SK-N-SH (cell line): ENCODE measurements at regions of chr10 and their contacts with region 1.

Region 1: DNA sequence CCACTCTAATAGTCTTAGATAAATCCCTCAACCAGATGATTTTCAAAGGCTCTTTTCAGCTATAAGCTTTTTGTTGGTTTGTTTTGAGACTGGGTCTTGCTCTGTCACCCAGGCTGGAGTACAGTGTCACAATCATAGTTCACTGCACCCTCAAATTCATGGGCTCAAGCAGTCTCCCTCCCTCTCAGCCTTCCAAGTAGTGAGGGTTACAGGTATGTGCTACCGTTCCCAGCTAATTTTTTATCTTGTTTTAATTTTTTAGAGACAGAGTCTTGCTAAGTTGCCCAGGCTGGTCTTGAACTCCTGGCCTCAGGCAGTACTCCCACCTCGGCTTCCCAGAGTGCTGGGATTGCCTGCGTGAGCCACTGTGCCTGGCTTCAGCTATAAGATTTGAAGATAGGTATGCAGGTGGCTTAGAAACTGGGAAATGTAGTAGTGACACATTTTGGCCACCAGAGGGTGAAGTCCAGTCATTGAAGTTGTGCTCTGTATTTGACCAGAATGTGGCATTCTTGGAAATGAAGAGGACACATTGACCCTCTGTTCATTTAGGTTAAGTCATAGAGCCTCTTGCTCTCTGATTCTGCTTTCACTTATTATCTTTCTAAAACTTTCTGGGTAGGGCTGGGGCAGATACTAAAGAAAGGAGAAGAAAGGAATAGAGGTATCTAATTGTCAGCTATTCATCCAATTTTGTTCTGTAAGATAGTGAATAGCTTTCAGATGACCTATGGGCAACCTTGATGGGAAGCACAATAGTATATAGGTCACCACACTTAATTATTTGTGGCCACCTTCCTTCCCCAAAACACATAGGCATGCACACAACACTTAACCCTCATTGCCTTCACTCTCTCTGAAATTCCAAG is 36.0 kb downstream of the R3HCC1L start:
- DNase-seq: peak; percentile 43
- H3K4me3 ChIP-seq: no peak overlapping the region
- H3K27ac ChIP-seq: no peak overlapping the region
- H3K4me1 ChIP-seq: no peaks in the 10 kb centered on the region
- H3K27me3 ChIP-seq: no peaks in the 10 kb centered on the region
- CTCF ChIP-seq: peak; percentile 81
- EP300 ChIP-seq: no peak
- RAD21 ChIP-seq: peak; percentile 70

Region 2: DNA sequence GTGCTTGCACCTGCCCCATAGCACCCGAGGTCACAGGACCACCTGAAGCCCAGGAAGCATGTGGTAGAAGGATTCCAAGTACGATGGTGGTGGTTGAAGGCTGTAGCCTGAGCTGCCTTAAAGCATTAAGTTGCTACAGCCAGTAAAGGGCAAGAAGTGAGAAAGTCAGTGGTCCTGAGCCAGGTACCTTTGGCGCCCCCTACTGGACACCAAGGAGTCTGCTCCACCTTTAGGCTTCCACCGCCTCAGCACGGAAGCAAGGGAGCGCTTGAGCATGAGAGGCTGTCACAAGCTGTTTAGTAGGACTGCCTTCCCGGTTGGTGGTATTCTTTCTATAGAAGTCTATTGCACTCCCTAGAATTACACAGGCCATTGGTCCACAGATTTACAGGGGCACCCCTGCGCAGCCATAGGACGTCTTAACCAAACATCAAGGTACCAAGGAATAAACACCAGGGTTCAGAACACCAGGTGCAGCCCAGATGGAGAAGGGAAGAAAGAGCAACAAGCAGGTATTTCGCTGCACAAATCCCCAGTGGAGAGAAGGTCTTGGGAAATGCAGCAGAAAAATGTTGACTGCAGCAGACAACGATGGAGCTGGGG is 142.2 kb before region 1 on chr10:
- CTCF ChIA-PET with region 1: no interaction called
- POLR2A ChIA-PET with region 1: no interaction called
- DNase-seq: peak; percentile 75
- H3K4me3 ChIP-seq: peak overlapping the region in 1 of 2 experiments; percentile 36; a peak in 1 of 4 replicates
- H3K27ac ChIP-seq: no peak overlapping the region
- H3K4me1 ChIP-seq: peaks cover 0 to 8% of the 10 kb centered on the region in 2 experiments; a peak in 1 of 4 replicates
- H3K27me3 ChIP-seq: peaks cover 27% of the 10 kb centered on the region
- CTCF ChIP-seq: peak; percentile 63
- EP300 ChIP-seq: no peak
- RAD21 ChIP-seq: peak; percentile 53

Region 3: DNA sequence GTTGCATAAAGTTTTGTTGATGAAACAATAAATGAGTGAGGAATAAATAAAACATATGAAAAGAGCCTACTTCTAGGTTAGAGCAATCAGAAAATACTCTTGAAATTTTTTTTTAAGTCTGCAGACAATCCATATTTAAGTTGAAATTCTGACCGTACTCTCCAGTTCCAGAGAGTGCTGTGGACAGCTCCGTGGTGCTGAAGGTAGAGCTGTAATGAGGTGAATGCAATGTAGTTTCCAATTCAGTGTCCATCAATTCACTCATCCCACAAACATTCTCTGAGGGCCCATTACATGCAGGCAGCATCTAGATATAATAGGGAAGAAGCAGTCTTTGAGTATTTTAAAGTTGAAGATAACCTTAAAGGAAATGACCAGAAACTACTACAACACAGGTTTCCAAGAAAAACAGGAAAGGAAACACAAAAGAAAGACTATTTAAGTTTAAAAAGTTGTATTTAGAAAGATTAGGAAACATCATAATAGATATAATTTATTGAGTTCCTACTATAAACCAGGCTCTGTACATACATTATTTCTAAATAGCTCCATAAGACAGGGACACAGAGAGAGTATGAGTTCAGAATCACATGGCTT is 96.1 kb before region 1 on chr10:
- CTCF ChIA-PET with region 1: no interaction called
- POLR2A ChIA-PET with region 1: no interaction called
- DNase-seq: no peak
- H3K4me3 ChIP-seq: no peak overlapping the region
- H3K27ac ChIP-seq: no peak overlapping the region
- H3K4me1 ChIP-seq: no peaks in the 10 kb centered on the region
- H3K27me3 ChIP-seq: no peaks in the 10 kb centered on the region
- CTCF ChIP-seq: no peak
- EP300 ChIP-seq: no peak
- RAD21 ChIP-seq: no peak

Region 4: DNA sequence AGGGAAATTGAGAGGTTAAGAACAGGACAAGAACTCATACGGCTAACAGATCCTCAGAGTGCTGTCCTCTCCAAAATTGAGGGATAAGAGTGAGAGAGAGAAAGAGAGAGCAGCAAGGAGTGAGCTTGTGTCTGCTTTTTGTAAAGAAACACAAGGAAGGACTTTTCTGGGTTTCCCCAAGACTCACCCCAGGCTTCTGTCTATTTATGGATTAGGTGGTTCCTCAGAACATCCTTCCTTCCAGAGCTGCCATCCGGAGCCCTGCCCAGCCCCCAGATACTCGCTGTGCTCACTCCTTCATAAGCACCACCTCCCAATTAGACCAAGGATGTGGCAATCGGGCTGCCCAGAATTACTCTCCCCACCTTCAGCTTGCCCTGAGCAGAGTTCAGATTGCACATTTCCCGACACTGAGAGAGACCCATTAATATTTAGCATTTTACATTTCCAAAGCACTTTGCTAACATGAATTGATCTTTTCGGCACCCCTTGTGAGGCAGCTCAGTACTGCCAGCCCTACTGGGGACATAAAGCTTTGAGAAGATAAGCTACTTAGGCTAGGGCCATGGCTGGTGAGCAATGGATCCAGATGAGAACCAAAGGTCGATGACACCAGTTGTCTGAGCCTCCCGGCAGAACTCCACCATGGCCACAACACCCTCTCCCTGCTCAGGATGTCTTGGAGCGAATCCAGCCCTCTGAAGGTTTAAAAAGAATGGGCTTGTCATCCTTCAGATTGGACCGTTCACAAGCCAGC is 55.3 kb before region 1 on chr10:
- CTCF ChIA-PET with region 1: no interaction called
- POLR2A ChIA-PET with region 1: no interaction called
- DNase-seq: no peak
- H3K4me3 ChIP-seq: no peak overlapping the region
- H3K27ac ChIP-seq: no peak overlapping the region
- H3K4me1 ChIP-seq: no peaks in the 10 kb centered on the region
- H3K27me3 ChIP-seq: peaks cover 14% of the 10 kb centered on the region; the same call in 1 of the 2 replicates
- CTCF ChIP-seq: no peak
- EP300 ChIP-seq: no peak
- RAD21 ChIP-seq: no peak

Region 5: DNA sequence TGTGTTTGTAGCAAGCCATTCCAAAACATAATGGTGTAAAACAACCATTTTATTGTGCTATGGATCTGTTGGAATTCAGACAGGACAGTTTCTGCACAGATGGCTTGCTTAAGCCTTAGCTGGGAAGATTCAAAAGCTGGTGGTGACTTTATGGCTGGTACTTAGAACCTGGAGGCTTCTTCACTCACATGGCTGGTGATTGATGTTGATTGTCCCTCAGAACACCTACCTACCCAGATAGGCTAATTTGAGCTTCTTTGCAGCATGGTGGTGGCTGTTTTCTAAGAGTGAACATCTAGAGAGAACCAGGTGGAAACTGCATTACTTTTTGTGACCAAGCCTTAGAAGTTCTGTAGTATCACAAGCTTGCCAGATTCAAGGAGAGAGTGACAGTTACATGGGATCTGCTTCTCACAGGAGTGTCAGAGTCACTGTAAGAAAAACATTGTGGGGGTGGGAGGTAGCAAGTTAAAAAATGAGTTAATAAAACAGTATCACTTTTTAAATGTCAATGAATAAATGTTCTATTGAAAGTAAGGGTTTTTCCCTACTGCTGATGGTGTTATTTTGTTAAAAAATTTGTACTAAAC is 28.9 kb before region 1 on chr10:
- CTCF ChIA-PET with region 1: interaction called, 13 read pairs
- POLR2A ChIA-PET with region 1: no interaction called
- DNase-seq: no peak
- H3K4me3 ChIP-seq: no peak overlapping the region
- H3K27ac ChIP-seq: no peak overlapping the region
- H3K4me1 ChIP-seq: no peaks in the 10 kb centered on the region; a peak in 2 of 4 replicates
- H3K27me3 ChIP-seq: no peaks in the 10 kb centered on the region
- CTCF ChIP-seq: no peak
- EP300 ChIP-seq: no peak
- RAD21 ChIP-seq: no peak

Region 6: DNA sequence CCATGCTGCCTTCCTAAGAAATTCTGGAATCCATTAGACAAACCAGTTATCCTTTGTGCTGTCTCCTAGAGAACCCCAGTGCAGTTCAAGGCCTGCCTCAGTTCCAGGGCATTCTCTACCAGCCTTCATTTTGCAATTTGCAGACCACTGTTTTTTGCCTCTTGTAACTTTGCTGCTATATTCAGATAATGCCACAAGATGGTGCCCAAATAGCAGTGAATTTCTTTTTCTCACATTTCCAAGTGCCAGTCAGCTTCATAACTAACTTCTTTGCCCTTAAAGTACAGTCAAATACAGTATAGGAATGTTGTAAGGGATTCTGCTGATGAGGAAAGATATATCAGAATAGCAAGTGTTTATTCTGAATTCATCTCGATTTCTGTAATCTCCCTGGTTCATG is 72.3 kb after region 1 on chr10:
- CTCF ChIA-PET with region 1: interaction called, 23 read pairs
- POLR2A ChIA-PET with region 1: no interaction called
- DNase-seq: peak; percentile 29
- H3K4me3 ChIP-seq: no peak overlapping the region; a peak in 1 of 4 replicates
- H3K27ac ChIP-seq: no peak overlapping the region
- H3K4me1 ChIP-seq: 0 out of 4 replicates have a peak, but pooled peaks cover 0 to 6% of the 10 kb centered on the region in 2 experiments
- H3K27me3 ChIP-seq: no peaks in the 10 kb centered on the region
- CTCF ChIP-seq: peak; percentile 69
- EP300 ChIP-seq: no peak
- RAD21 ChIP-seq: peak; percentile 85

Region 7: GRCh38 chr10:98314489-98315284 is 144.2 kb after region 1 on chr10:
- CTCF ChIA-PET with region 1: interaction called, 80 read pairs
- POLR2A ChIA-PET with region 1: interaction called, 4 read pairs
- DNase-seq: no peak
- H3K4me3 ChIP-seq: no peak overlapping the region
- H3K27ac ChIP-seq: no peak overlapping the region
- H3K4me1 ChIP-seq: peaks cover 9 to 10% of the 10 kb centered on the region in 2 experiments; a peak in 2 of 4 replicates
- H3K27me3 ChIP-seq: no peaks in the 10 kb centered on the region
- CTCF ChIP-seq: no peak
- EP300 ChIP-seq: no peak
- RAD21 ChIP-seq: no peak